ENCODE measurements at regions of chr7 and their contacts with region 1.

Region 1: DNA sequence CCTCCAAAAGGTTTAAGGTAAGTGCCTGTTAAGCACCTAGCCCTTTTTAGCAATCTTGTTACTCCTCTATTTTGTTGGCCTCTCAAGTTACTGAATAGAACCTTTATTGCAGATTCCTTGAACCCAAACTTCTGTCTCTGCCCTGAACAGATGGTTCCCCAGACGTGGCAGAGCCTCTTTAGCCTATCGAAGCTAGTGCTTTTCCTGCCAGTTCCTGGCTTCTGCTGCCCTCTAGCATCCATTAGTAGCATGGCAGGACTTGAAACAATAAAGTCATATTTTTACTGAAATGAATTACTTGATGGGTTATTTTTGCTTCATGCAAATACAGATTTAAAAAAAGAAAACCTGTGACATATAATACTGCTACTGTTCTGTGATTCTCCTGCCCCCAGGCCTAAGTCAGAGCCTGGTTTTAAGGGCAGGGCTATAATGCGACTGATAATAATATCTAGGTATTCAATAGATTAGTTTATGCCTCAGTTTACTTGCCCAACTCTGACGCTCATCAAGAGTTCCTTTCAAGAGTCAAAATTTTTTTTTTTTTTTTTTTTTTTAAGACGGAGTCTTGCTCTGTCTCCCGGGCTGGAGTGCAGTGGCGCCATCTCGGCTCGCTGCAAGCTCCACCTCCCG is 84.3 kb upstream of the PHF14 start:
- DNase-seq: peak; percentile 39
- H3K4me3 Mint-ChIP-seq: no peak overlapping the region
- H3K27ac Mint-ChIP-seq: no peak overlapping the region
- H3K4me1 Mint-ChIP-seq: no peaks in the 10 kb centered on the region
- H3K27me3 Mint-ChIP-seq: no peaks in the 10 kb centered on the region
- CTCF ChIP-seq: peak; percentile 68

Region 2: GRCh38 chr7:10718768-10719167 is 170.6 kb before region 1 on chr7:
- CTCF ChIA-PET with region 1: no interaction called
- intact Hi-C with region 1: loop called (anchors 5 kb)
- DNase-seq: no peak
- H3K4me3 Mint-ChIP-seq: no peak overlapping the region
- H3K27ac Mint-ChIP-seq: no peak overlapping the region
- H3K4me1 Mint-ChIP-seq: no peaks in the 10 kb centered on the region
- H3K27me3 Mint-ChIP-seq: no peaks in the 10 kb centered on the region
- CTCF ChIP-seq: no peak

Region 3: DNA sequence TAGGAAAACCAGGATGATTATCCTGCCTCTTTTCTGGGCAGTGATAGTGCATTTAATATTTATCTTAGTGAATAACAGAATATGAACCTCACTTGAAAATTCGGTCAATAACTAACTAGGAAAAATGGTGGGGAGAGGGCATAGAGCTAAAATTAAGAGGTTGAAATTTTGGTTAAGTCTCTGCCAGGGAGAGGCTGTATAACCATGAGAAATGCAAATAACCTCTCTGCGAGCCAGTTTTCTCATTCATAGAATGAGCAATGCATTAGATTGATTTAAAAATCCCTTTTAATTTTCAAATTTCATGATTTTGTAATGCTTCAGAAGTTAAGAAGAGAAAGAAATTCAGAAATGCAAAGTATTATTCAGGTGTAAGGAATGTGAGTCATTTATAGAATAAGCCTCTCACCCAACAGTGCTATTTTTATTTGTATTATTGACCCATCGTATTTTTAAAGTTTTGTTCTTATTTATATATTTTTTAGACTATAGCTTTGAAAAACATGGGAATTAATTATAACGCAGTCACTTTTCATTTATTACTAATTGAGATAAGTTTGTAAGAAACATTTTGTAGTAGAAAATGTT is 189.0 kb after region 1 on chr7:
- CTCF ChIA-PET with region 1: no interaction called
- intact Hi-C with region 1: no loop called
- DNase-seq: no peak
- H3K4me3 Mint-ChIP-seq: no peak overlapping the region
- H3K27ac Mint-ChIP-seq: no peak overlapping the region
- H3K4me1 Mint-ChIP-seq: peaks cover 8% of the 10 kb centered on the region
- H3K27me3 Mint-ChIP-seq: no peaks in the 10 kb centered on the region
- CTCF ChIP-seq: no peak

Region 4: GRCh38 chr7:11212080-11212711 is 322.8 kb after region 1 on chr7:
- CTCF ChIA-PET with region 1: no interaction called
- intact Hi-C with region 1: no loop called
- DNase-seq: peak; percentile 57
- H3K4me3 Mint-ChIP-seq: no peak overlapping the region
- H3K27ac Mint-ChIP-seq: no peak overlapping the region
- H3K4me1 Mint-ChIP-seq: no peaks in the 10 kb centered on the region
- H3K27me3 Mint-ChIP-seq: no peaks in the 10 kb centered on the region
- CTCF ChIP-seq: peak; percentile 65